GM12878 (cell line): ENCODE measurements at regions of chr7 and their contacts with region 1.

Region 1: GRCh38 chr7:21352540-21353387 is 75.1 kb upstream of the SP4 start:
- DNase-seq: peak; percentile 93
- ATAC-seq: peak; percentile 86
- H3K4me3 ChIP-seq: peak overlapping the region; percentile 43
- H3K27ac ChIP-seq: peak overlapping the region; percentile 85
- H3K4me1 ChIP-seq: peaks cover 38% of the 10 kb centered on the region
- H3K27me3 ChIP-seq: no peaks in the 10 kb centered on the region
- CTCF ChIP-seq: no peak
- EP300 ChIP-seq: peak; percentile 23 to 83; a peak in 3 of 4 replicates
- POLR2A ChIP-seq: no peak
- RAD21 ChIP-seq: peak; percentile 30; the same call in 1 of the 2 replicates

Region 2: GRCh38 chr7:20913853-20914252 is 438.9 kb before region 1 on chr7:
- CTCF ChIA-PET with region 1: no interaction called
- POLR2A ChIA-PET with region 1: no interaction called
- RAD21 ChIA-PET with region 1: no interaction called
- SMC1A ChIA-PET with region 1: no interaction called
- in situ Hi-C with region 1: no loop called
- intact Hi-C with region 1: no loop called
- DNase-seq: no peak
- ATAC-seq: no peak
- H3K4me3 ChIP-seq: no peak overlapping the region
- H3K27ac ChIP-seq: no peak overlapping the region
- H3K4me1 ChIP-seq: no peaks in the 10 kb centered on the region
- H3K27me3 ChIP-seq: no peaks in the 10 kb centered on the region; a peak in 2 of 4 replicates
- CTCF ChIP-seq: no peak
- EP300 ChIP-seq: no peak
- POLR2A ChIP-seq: no peak
- RAD21 ChIP-seq: no peak

Region 3: DNA sequence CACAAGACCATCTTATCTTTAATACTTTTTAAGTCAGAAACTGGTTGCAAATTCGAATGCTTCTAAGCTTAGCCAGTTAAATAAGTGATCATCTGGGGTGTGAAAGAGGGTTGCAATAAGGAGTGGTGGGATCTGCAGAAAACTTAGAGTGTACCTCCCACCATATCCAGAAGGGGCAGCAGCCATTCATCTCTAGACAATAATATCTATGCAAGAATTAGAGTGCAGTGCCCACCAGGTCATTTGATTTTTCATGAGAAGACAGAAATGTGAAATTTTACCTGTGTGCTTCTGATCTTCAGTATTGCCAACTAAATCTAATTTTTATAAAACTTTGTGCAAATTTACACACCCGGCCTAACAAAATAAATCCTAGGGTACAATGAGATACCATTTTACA is 52.1 kb before region 1 on chr7:
- CTCF ChIA-PET with region 1: interaction called, 3 read pairs
- POLR2A ChIA-PET with region 1: no interaction called
- RAD21 ChIA-PET with region 1: interaction called, 6 read pairs
- SMC1A ChIA-PET with region 1: interaction called, 7 read pairs
- in situ Hi-C with region 1: no loop called
- intact Hi-C with region 1: loop called (anchors 5 kb)
- DNase-seq: no peak
- ATAC-seq: peak; percentile 57; the same call in 2 of the 3 replicates
- H3K4me3 ChIP-seq: no peak overlapping the region
- H3K27ac ChIP-seq: no peak overlapping the region
- H3K4me1 ChIP-seq: no peaks in the 10 kb centered on the region
- H3K27me3 ChIP-seq: no peaks in the 10 kb centered on the region
- CTCF ChIP-seq: peak in 1 of 3 experiments; percentile 35; a peak in 1 of 6 replicates
- EP300 ChIP-seq: no peak
- POLR2A ChIP-seq: no peak
- RAD21 ChIP-seq: peak; percentile 39

Region 4: DNA sequence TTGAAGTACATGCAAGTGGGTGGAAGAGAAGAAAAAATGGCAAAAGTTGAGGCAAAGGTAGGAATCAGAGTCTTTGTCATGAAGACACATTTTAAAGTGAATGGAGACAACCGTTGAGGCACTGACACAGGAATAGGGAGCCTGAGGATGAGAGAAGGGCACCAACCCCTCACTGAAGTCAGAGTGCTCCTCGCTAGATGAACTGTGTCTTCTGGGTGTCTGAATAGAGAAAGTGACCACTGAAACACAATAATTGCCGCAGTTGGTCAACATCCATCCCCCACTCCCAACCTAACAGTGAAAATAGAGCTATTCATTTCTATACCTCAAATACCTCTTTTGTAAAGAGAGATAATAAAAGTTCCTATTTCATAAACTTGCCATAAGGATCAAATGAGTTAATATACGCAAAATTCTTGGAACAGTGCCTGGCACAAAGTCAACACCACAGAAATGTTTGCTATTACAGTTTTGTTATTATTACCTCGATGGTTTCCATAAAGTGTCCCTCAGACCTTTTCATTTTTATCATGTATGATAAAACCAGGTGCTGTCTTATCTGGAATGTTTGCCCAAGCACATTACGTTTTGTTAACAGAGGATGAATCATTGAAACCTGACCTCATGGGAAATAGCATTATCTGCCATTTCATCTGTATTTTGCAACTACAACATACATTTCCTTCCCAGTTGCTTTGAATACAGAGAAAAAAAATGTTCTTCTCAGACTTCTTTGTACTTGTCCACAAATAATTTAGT is 13.3 kb after region 1 on chr7:
- CTCF ChIA-PET with region 1: interaction called, 10 read pairs
- POLR2A ChIA-PET with region 1: interaction called, 12 read pairs
- RAD21 ChIA-PET with region 1: interaction called, 29 read pairs
- SMC1A ChIA-PET with region 1: interaction called, 52 read pairs
- in situ Hi-C with region 1: no loop called
- intact Hi-C with region 1: no loop called
- DNase-seq: no peak
- ATAC-seq: no peak
- H3K4me3 ChIP-seq: no peak overlapping the region
- H3K27ac ChIP-seq: no peak overlapping the region; the same call in 1 of the 2 replicates
- H3K4me1 ChIP-seq: peaks cover 21% of the 10 kb centered on the region
- H3K27me3 ChIP-seq: no peaks in the 10 kb centered on the region
- CTCF ChIP-seq: no peak
- EP300 ChIP-seq: no peak
- POLR2A ChIP-seq: no peak
- RAD21 ChIP-seq: no peak

Region 5: DNA sequence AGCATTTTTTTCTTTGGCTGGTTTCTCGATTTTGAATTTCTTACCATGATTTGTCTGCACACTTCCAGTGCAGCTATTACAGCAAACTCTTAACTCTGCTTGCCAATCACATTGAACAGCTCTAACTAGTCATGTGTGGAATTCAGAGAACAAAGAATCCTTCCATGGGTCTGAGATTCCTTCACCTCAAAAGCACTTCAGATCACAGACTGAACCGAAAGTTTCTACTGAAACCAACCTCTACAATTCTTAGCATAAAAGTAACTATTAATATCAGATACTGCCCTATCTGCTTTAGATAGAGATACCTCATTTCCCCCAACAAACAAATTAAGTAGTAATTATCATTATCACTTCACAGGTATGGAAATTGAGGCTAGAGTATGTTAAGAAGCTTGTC is 18.6 kb after region 1 on chr7:
- CTCF ChIA-PET with region 1: interaction called, 8 read pairs
- POLR2A ChIA-PET with region 1: interaction called, 5 read pairs
- RAD21 ChIA-PET with region 1: interaction called, 29 read pairs
- SMC1A ChIA-PET with region 1: interaction called, 52 read pairs
- in situ Hi-C with region 1: no loop called
- intact Hi-C with region 1: no loop called
- DNase-seq: no peak
- ATAC-seq: peak; percentile 83
- H3K4me3 ChIP-seq: no peak overlapping the region
- H3K27ac ChIP-seq: no peak overlapping the region
- H3K4me1 ChIP-seq: peaks cover 12% of the 10 kb centered on the region; the same call in 1 of the 2 replicates
- H3K27me3 ChIP-seq: no peaks in the 10 kb centered on the region
- CTCF ChIP-seq: no peak
- EP300 ChIP-seq: no peak
- POLR2A ChIP-seq: no peak
- RAD21 ChIP-seq: no peak

Region 6: GRCh38 chr7:21412410-21412851 is 59.7 kb after region 1 on chr7:
- CTCF ChIA-PET with region 1: interaction called, 4 read pairs
- POLR2A ChIA-PET with region 1: interaction called, 11 read pairs
- RAD21 ChIA-PET with region 1: interaction called, 35 read pairs
- SMC1A ChIA-PET with region 1: interaction called, 34 read pairs
- in situ Hi-C with region 1: no loop called
- intact Hi-C with region 1: no loop called
- DNase-seq: peak; percentile 43
- ATAC-seq: peak; percentile 79
- H3K4me3 ChIP-seq: no peak overlapping the region
- H3K27ac ChIP-seq: peak overlapping the region; percentile 70
- H3K4me1 ChIP-seq: peaks cover 11% of the 10 kb centered on the region
- H3K27me3 ChIP-seq: no peaks in the 10 kb centered on the region
- CTCF ChIP-seq: no peak
- EP300 ChIP-seq: no peak
- POLR2A ChIP-seq: no peak
- RAD21 ChIP-seq: 0 out of 2 replicates have a peak, but pooled peaks have one; percentile 1

Region 7: GRCh38 chr7:21945454-21946227 is 592.9 kb after region 1 on chr7 and contains the start of gene CDCA7L:
- CTCF ChIA-PET with region 1: no interaction called
- POLR2A ChIA-PET with region 1: interaction called, 5 read pairs
- RAD21 ChIA-PET with region 1: no interaction called
- SMC1A ChIA-PET with region 1: no interaction called
- in situ Hi-C with region 1: loop called (anchors 10 kb)
- intact Hi-C with region 1: loop called (anchors 10 kb)
- DNase-seq: peak; percentile 32
- ATAC-seq: peak; percentile 85
- H3K4me3 ChIP-seq: peak within 1 kb of the TSS; percentile 80
- H3K27ac ChIP-seq: peak within 1 kb of the TSS; percentile 85
- H3K4me1 ChIP-seq: peaks cover 44% of the 10 kb centered on the region
- H3K27me3 ChIP-seq: no peaks in the 10 kb centered on the region
- CTCF ChIP-seq: 0 out of 6 replicates have a peak, but pooled peaks of 1 of the 3 experiments have one; percentile 2
- EP300 ChIP-seq: no peak
- POLR2A ChIP-seq: peak; percentile 93
- RAD21 ChIP-seq: peak; percentile 20; the same call in 1 of the 2 replicates
- polyA plus RNA-seq, gene CDCA7L: 30.3 to 45.2 TPM